WTC11 (cell line): ENCODE measurements at regions of chr5 and their contacts with region 1.

Region 1: GRCh38 chr5:157471709-157472108 is 11.7 kb downstream of the NIPAL4 start:
- DNase-seq: peak; percentile 50
- ATAC-seq: peak; percentile 90
- H3K4me3 Mint-ChIP-seq: no peak overlapping the region
- H3K27ac Mint-ChIP-seq: no peak overlapping the region
- H3K4me1 Mint-ChIP-seq: no peaks in the 10 kb centered on the region
- H3K27me3 Mint-ChIP-seq: no peaks in the 10 kb centered on the region
- CTCF ChIP-seq: no peak; the same call in 1 of the 2 replicates

Region 2: GRCh38 chr5:157328277-157328912 is 143.3 kb before region 1 on chr5:
- CTCF ChIA-PET with region 1: interaction called, 21 read pairs
- POLR2A ChIA-PET with region 1: no interaction called
- DNase-seq: peak; percentile 45
- ATAC-seq: peak; percentile 98
- H3K4me3 Mint-ChIP-seq: no peak overlapping the region
- H3K27ac Mint-ChIP-seq: no peak overlapping the region
- H3K4me1 Mint-ChIP-seq: no peaks in the 10 kb centered on the region
- H3K27me3 Mint-ChIP-seq: no peaks in the 10 kb centered on the region
- CTCF ChIP-seq: peak; percentile 76

Region 3: GRCh38 chr5:157354800-157355199 is 116.9 kb before region 1 on chr5:
- CTCF ChIA-PET with region 1: interaction called, 27 read pairs
- POLR2A ChIA-PET with region 1: no interaction called
- DNase-seq: peak; percentile 42
- ATAC-seq: peak; percentile 99
- H3K4me3 Mint-ChIP-seq: no peak overlapping the region
- H3K27ac Mint-ChIP-seq: no peak overlapping the region
- H3K4me1 Mint-ChIP-seq: peaks cover 2% of the 10 kb centered on the region; the same call in 1 of the 2 replicates
- H3K27me3 Mint-ChIP-seq: no peaks in the 10 kb centered on the region
- CTCF ChIP-seq: peak; percentile 53

Region 4: DNA sequence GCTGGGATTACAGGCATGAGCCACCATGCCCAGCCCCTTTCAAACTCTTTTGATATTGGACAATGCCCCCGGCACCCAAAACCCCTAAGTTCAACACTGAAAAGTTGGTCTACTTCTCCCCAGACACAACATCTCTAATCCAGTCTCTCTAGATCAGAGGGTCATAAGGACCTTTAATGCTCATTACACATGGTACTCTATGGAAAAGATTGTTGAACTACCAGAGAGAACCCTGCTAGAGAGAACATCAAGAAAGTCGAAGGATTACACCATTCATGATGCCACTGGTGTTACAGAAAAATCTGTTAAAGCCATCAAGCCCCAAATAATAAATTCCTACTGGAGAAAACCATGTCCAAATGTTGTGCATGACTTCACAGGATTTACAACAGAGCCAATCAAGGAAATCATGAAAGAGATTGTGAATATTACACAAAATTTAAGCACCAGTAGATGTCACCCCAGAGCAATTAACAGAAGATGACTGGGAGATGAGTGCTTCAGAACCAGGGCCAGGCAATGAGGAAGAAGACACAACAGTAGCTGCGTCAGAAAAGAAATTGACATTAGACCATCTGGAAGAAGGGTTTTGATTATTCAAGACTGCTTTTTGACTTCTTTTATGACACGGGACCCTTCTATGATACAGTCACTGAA is 40.0 kb before region 1 on chr5:
- CTCF ChIA-PET with region 1: interaction called, 40 read pairs
- POLR2A ChIA-PET with region 1: no interaction called
- DNase-seq: no peak
- ATAC-seq: peak; percentile 85
- H3K4me3 Mint-ChIP-seq: no peak overlapping the region
- H3K27ac Mint-ChIP-seq: no peak overlapping the region
- H3K4me1 Mint-ChIP-seq: no peaks in the 10 kb centered on the region
- H3K27me3 Mint-ChIP-seq: peaks cover 7% of the 10 kb centered on the region
- CTCF ChIP-seq: no peak

Region 5: GRCh38 chr5:157459715-157460599 is 11.8 kb before region 1 on chr5 and contains the start of gene NIPAL4:
- CTCF ChIA-PET with region 1: interaction called, 57 read pairs
- POLR2A ChIA-PET with region 1: interaction called, 7 read pairs
- DNase-seq: peak; percentile 33
- ATAC-seq: peak; percentile 73
- H3K4me3 Mint-ChIP-seq: peak within 1 kb of the TSS; percentile 73
- H3K27ac Mint-ChIP-seq: no peak within 1 kb of the TSS
- H3K4me1 Mint-ChIP-seq: peaks cover 28% of the 10 kb centered on the region
- H3K27me3 Mint-ChIP-seq: peaks cover 53% of the 10 kb centered on the region
- CTCF ChIP-seq: no peak
- total RNA-seq, gene NIPAL4: 0.11 TPM in 1 of 3 replicates, not detected in the others